Heart left ventricle (tissue), 16 donors: ENCODE measurements at regions of chr17 and their contacts with region 1.

Region 1: DNA sequence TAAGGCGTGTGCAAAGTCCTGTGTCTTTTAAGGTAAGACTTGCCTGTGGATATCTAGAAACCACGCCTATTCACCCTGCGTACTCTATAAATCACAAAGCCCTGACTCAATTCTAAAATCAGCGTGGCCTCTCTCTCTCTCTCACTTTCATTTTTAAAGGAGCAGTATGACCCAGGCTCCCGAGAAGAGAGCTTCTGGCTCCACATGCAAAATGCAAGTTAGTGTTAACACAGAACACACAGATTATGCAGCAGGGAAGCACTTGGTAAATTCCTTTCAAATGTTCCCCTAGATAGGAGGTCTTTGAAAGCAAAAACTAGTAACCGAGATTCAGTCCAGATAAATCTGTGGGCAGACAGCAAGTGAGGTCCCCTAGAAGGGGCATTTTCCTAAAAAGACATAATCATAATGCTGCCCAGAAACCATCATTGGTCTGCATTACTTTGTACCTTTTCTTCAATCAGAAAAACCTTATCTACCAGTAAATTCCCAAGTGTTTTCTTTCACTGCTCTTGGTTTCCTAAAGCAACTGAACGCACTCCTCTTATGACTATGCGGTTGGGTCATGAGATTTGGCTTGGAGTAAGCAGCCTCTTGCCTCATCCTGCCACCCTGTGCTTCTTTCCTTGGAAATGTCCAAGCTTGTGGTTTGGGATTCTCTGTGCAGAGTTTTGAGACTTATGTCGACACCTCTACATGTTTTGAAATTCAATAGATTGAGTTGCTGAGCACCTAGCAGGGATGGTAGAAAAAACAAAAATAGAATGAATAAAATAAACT is 31.7 kb upstream of the KCNJ2 start:
- DNase-seq: peak in 4 of 5 donors; percentile 32 to 53 (median 34)
- ATAC-seq: peak; percentile 95 to 99 (median 98)
- H3K4me3 ChIP-seq: peak overlapping the region in 11 of 12 donors; percentile 14 to 58 (median 42)
- H3K27ac ChIP-seq: peak overlapping the region; percentile 55 to 86 (median 82)
- H3K4me1 ChIP-seq: peaks cover 0 to 22% (median 15%) of the 10 kb centered on the region in 12 donors
- H3K27me3 ChIP-seq: no peaks in the 10 kb centered on the region
- CTCF ChIP-seq: no peak
- POLR2A ChIP-seq: no peak

Region 2: GRCh38 chr17:69729937-69730336 is 407.7 kb before region 1 on chr17:
- intact Hi-C with region 1: loop called in 2 of 10 experiments (anchors 5 to 10 kb)
- DNase-seq: no peak
- ATAC-seq: no peak
- H3K4me3 ChIP-seq: no peak overlapping the region
- H3K27ac ChIP-seq: no peak overlapping the region
- H3K4me1 ChIP-seq: peaks cover 0 to 34% (median 14%) of the 10 kb centered on the region in 12 donors
- H3K27me3 ChIP-seq: no peaks in the 10 kb centered on the region
- CTCF ChIP-seq: no peak
- POLR2A ChIP-seq: no peak

Region 3: DNA sequence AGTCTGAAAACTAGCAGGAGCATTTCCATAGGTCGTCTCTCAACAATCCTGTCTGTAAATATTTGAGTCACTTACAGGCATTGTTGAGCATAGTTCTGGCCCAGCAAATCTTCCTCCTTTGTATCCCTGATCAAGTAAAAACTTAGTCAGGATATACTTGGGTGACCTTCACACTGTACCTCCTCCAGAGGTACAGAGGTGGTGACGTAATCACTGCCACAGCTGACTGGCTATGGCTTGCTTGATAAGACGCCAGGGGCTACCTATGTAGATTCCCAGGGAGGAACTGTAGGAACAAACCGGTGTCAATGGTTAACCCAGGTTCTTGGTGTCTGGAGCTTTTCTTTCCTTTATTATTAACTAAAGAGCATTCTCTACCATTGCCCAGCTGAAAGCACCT is 62.7 kb before region 1 on chr17 and contains the start of gene KCNJ16:
- intact Hi-C with region 1: loop called in 1 of 10 experiments (anchors 10 kb)
- DNase-seq: no peak
- ATAC-seq: no peak
- H3K4me3 ChIP-seq: no peak within 1 kb of the TSS
- H3K27ac ChIP-seq: no peak within 1 kb of the TSS
- H3K4me1 ChIP-seq: peaks cover 0 to 5% (median 0%) of the 10 kb centered on the region in 12 donors
- H3K27me3 ChIP-seq: no peaks in the 10 kb centered on the region
- CTCF ChIP-seq: no peak
- POLR2A ChIP-seq: no peak
- total RNA-seq, gene KCNJ16: 0.34 TPM in 1 of 9 donors, not detected in the others